ENCODE measurements at regions of chr11 and their contacts with region 1.

Region 1: DNA sequence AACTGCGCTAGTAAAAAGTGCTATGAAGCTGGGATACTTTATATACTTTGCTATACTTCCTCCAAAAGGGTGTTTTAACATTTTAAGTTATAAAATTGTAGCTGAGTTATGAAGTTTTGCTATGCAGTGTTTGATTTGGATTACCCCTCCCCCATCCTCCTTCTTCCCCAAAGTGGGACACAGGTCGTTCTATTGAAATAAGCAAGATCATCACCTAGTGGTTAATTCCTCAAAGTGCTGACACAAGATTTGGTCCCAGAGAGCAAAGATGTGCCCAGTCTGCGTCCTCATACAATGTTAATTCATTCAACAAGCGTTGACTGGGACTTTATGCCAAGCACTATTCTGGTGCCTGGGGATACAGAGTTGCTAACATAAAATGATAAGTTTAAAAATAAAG is 78.5 kb downstream of the SPON1 start:
- DNase-seq: no peak
- H3K4me3 Mint-ChIP-seq: no peak overlapping the region
- H3K27ac Mint-ChIP-seq: no peak overlapping the region
- H3K4me1 Mint-ChIP-seq: no peaks in the 10 kb centered on the region
- H3K27me3 Mint-ChIP-seq: peaks cover 36% of the 10 kb centered on the region
- CTCF ChIP-seq: peak; percentile 49

Region 2: GRCh38 chr11:13955971-13956421 is 85.0 kb before region 1 on chr11:
- CTCF ChIA-PET with region 1: no interaction called
- intact Hi-C with region 1: loop called (anchors 1 kb)
- DNase-seq: peak; percentile 43
- H3K4me3 Mint-ChIP-seq: no peak overlapping the region
- H3K27ac Mint-ChIP-seq: no peak overlapping the region
- H3K4me1 Mint-ChIP-seq: no peaks in the 10 kb centered on the region
- H3K27me3 Mint-ChIP-seq: no peaks in the 10 kb centered on the region
- CTCF ChIP-seq: peak; percentile 73

Region 3: GRCh38 chr11:14223636-14224288 is 182.7 kb after region 1 on chr11:
- CTCF ChIA-PET with region 1: no interaction called
- intact Hi-C with region 1: no loop called
- DNase-seq: no peak
- H3K4me3 Mint-ChIP-seq: no peak overlapping the region
- H3K27ac Mint-ChIP-seq: no peak overlapping the region
- H3K4me1 Mint-ChIP-seq: no peaks in the 10 kb centered on the region
- H3K27me3 Mint-ChIP-seq: peaks cover 47% of the 10 kb centered on the region
- CTCF ChIP-seq: no peak